ENCODE measurements at regions of chr11 and their contacts with region 1.

Region 1: GRCh38 chr11:12331239-12331874 is 46.0 kb upstream of the PARVA start:
- DNase-seq: peak; percentile 73

Region 2: GRCh38 chr11:12288212-12288930 is 43.0 kb before region 1 on chr11:
- CTCF ChIA-PET with region 1: interaction called, 11 read pairs
- POLR2A ChIA-PET with region 1: no interaction called
- DNase-seq: peak; percentile 86

Region 3: DNA sequence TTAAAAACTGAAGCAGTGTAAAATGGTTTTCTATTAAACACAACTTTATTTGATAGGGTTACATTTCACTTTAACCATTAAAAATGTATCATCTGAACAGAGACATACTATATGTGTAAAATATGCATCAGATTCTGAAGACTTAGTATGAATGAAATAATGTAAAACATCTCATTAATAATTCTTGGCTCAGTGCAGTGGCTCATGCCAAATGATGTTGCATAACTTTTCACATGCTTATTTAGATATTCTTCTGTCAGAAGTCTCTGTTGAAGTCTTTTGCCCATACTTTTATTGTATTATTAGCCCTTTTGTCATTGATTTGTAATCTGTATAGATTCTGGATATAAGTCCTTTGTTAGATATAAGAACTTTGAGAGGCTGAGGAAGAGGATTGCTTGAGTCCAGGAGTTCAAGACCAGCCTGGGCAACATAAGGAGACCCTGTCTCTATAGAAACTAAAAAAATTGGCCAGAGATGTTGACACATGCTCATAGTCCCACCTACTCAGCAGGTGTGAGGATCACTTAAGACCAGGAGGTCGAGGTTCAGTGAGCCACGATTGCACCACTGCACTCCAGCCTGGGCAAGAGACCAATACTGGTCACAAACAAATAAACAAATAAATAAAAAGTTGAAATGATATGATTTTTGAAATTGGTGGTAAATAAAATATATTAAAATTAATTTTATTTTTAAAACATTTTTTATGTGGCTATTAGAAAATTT is 27.8 kb before region 1 on chr11:
- CTCF ChIA-PET with region 1: no interaction called
- POLR2A ChIA-PET with region 1: no interaction called
- DNase-seq: no peak

Measured in HEK293T (cell line).